Panc1 (cell line): ENCODE measurements at regions of chr17 and their contacts with region 1.

Region 1: GRCh38 chr17:73092523-73093135 is at the start of gene SLC39A11:
- DNase-seq: peak; percentile 65
- ATAC-seq: peak; percentile 98
- H3K4me3 ChIP-seq: peak within 1 kb of the TSS; percentile 62 to 80
- H3K27ac ChIP-seq: peak within 1 kb of the TSS; percentile 84
- H3K4me1 ChIP-seq: peaks cover 21% of the 10 kb centered on the region
- H3K27me3 ChIP-seq: no peaks in the 10 kb centered on the region
- CTCF ChIP-seq: no peak
- total RNA-seq, gene SLC39A11: 56.1 TPM

Region 2: GRCh38 chr17:72882426-72882825 is 210.2 kb before region 1 on chr17:
- CTCF ChIA-PET with region 1: no interaction called
- POLR2A ChIA-PET with region 1: no interaction called
- in situ Hi-C with region 1: no loop called
- intact Hi-C with region 1: no loop called
- DNase-seq: no peak
- ATAC-seq: no peak
- H3K4me3 ChIP-seq: no peak overlapping the region
- H3K27ac ChIP-seq: no peak overlapping the region
- H3K4me1 ChIP-seq: no peaks in the 10 kb centered on the region
- H3K27me3 ChIP-seq: no peaks in the 10 kb centered on the region
- CTCF ChIP-seq: no peak

Region 3: DNA sequence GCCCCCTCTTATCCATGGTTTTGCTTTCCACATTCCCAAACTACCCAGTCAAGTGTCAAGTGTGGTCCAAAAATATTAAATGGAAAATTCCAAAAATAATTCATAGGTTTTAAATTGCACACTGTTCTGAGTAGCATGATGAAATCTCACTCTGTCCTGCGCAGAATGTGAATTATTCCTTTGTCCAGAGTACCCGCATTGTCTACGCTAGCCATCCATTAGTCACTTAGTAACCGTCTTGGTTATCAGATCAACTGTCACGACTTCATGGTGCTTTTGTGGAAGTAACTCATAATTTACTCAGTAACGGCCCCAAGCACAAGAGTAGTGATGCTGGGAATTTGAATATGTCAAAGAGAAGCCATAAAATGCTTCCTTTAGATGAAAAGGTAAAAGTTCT is 95.1 kb before region 1 on chr17:
- CTCF ChIA-PET with region 1: no interaction called
- POLR2A ChIA-PET with region 1: no interaction called
- in situ Hi-C with region 1: no loop called
- intact Hi-C with region 1: loop called (anchors 10 kb)
- DNase-seq: no peak
- ATAC-seq: no peak
- H3K4me3 ChIP-seq: no peak overlapping the region
- H3K27ac ChIP-seq: no peak overlapping the region
- H3K4me1 ChIP-seq: 0 out of 2 replicates have a peak, but pooled peaks cover 4% of the 10 kb centered on the region
- H3K27me3 ChIP-seq: no peaks in the 10 kb centered on the region
- CTCF ChIP-seq: no peak